ENCODE measurements at regions of chr16 and their contacts with region 1.

Region 1: GRCh38 chr16:71565812-71566700 is 10.8 kb downstream of the TAT start:
- DNase-seq: no peak
- ATAC-seq: no peak
- H3K4me3 ChIP-seq: peak overlapping the region; percentile 55
- H3K27ac ChIP-seq: peak overlapping the region; percentile 61
- H3K4me1 ChIP-seq: peaks cover 5 to 15% of the 10 kb centered on the region in 2 experiments; a peak in 4 of 5 replicates
- H3K27me3 ChIP-seq: peaks cover 7 to 15% of the 10 kb centered on the region in 2 experiments; a peak in 4 of 5 replicates
- CTCF ChIP-seq: no peak
- EP300 ChIP-seq: 0 out of 2 replicates have a peak, but pooled peaks have one; percentile 1
- POLR2A ChIP-seq: no peak
- RAD21 ChIP-seq: no peak

Region 2: DNA sequence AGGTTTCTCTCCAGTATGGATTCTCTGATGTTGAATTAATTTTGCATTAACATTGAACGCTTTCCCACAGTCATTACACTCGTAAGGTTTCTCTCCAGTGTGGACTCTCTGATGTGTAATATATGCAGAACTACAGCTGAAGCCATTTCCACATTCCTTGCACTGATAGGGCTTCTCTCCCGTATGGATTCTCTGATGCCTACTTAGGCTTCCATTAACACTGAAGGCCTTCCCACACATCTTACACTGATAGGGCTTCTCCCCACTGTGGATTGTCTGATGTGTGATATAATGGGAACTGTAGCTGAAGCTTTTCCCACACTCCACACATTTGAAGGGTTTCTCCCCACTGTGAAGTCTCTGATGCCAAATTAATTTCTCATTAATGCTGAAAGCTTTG is 117.0 kb before region 1 on chr16:
- CTCF ChIA-PET with region 1: no interaction called
- POLR2A ChIA-PET with region 1: no interaction called
- in situ Hi-C with region 1: no loop called
- intact Hi-C with region 1: no loop called
- DNase-seq: no peak
- ATAC-seq: no peak
- H3K4me3 ChIP-seq: no peak overlapping the region
- H3K27ac ChIP-seq: no peak overlapping the region
- H3K4me1 ChIP-seq: no peaks in the 10 kb centered on the region
- H3K27me3 ChIP-seq: no peaks in the 10 kb centered on the region
- CTCF ChIP-seq: no peak
- EP300 ChIP-seq: no peak
- POLR2A ChIP-seq: no peak
- RAD21 ChIP-seq: no peak

Region 3: DNA sequence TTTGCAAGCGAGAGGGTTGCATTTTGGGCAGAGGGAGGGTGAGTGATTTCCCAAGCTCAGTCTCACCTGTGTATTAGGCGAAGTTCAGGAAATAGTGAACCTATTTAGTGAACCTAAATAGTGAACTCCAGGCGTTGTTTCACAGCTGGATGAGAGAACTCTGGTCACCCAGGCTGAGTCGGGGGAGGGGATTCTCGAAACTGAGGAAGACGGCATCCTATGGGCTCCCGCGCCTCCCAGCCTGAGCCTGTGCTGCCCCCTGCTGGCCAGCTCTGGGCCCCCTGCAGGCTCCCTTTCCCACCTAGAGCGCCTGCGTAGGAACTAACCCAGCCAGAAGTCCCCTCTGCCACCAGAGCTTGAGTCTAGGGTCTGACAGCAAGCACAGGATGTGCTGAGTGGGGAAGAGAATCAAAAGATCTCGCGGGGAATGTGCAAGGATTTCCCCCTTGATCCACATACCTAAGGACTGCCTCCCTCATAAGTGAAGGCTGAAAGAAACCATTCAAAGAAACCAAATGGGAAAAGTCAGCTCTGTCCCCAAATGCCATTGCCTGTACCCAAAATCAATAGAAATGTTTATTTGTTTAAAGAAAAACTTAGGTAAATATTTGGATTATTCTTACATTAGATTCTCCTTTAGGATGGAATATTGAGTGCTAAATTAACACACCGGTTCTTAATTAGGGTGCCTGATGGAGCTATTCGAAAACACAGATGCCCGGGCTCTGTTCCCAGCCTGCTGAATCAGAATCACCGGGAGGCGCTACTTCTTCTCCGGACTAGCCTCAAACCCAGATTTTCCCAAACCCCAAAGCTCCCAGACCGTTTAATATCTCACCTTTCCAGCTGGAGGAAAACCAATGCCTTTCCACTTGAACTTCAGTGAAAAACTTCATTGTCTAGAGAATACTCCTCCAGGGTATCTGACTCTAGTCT is 45.1 kb after region 1 on chr16:
- CTCF ChIA-PET with region 1: interaction called, 6 read pairs
- POLR2A ChIA-PET with region 1: interaction called, 5 read pairs
- in situ Hi-C with region 1: no loop called
- intact Hi-C with region 1: loop called (anchors 1 kb)
- DNase-seq: peak; percentile 80 to 91 (median 87)
- ATAC-seq: peak; percentile 99
- H3K4me3 ChIP-seq: no peak overlapping the region
- H3K27ac ChIP-seq: no peak overlapping the region
- H3K4me1 ChIP-seq: peaks cover 0 to 3% of the 10 kb centered on the region in 2 experiments; a peak in 1 of 5 replicates
- H3K27me3 ChIP-seq: peaks cover 3 to 17% of the 10 kb centered on the region in 2 experiments; a peak in 3 of 5 replicates
- CTCF ChIP-seq: peak; percentile 90 to 97 (median 95)
- EP300 ChIP-seq: no peak
- POLR2A ChIP-seq: no peak
- RAD21 ChIP-seq: peak; percentile 77 to 87